Mucosa of descending colon (tissue), 3 donors: ENCODE measurements at regions of chr4 and their contacts with region 1.

Region 1: DNA sequence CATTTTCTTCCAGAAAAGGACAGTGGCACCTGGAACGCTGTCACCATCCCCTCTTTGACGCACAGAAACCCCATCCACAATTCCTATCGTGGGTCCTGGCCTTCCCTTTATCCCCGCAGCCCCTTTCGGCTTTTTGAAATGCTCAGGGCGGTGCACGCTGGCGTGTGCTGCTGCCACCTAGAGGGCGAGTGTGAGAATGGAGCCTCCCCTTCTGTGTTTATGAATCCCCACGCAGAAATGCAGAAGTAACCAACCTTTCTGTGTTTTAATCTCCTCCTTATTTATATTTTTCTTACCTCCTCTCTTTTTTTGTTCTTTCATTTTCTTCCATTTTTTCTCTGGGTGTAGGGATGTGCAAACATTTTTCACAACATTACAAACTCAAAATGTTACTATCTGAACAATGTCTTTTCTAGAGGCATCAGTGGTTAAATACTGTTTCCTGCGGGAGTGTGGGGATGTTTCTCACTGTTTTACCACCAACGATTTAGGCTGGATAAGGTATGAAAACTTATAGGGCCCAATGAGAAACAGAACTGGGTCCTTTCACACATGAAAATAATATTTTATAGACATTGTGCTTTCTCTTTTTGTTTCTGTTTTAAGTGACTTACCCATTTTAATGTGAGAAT is 50.0 kb downstream of the TMA16 start:
- DNase-seq: peak; percentile 55 to 72 (median 68)
- ATAC-seq: peak; percentile 87
- H3K4me3 ChIP-seq: no peak overlapping the region
- H3K4me1 ChIP-seq: no peaks in the 10 kb centered on the region
- CTCF ChIP-seq: peak; percentile 75

Region 2: GRCh38 chr4:163484906-163485305 is 59.6 kb before region 1 on chr4:
- intact Hi-C with region 1: loop called (anchors 5 to 10 kb)
- DNase-seq: peak in 1 of 3 donors; percentile 71
- ATAC-seq: peak; percentile 38
- H3K4me3 ChIP-seq: no peak overlapping the region
- H3K4me1 ChIP-seq: no peaks in the 10 kb centered on the region
- CTCF ChIP-seq: no peak

Region 3: GRCh38 chr4:164212134-164212533 is 667.6 kb after region 1 on chr4:
- intact Hi-C with region 1: no loop called
- DNase-seq: no peak
- ATAC-seq: no peak
- H3K4me3 ChIP-seq: no peak overlapping the region
- H3K4me1 ChIP-seq: no peaks in the 10 kb centered on the region
- CTCF ChIP-seq: no peak